GM18951 (cell line): ENCODE measurements at regions of chr6 and their contacts with region 1.

Region 1: GRCh38 chr6:25490018-25490801 is 161.8 kb upstream of the SCGN start:
- POLR2A ChIP-seq: no peak

Region 2: DNA sequence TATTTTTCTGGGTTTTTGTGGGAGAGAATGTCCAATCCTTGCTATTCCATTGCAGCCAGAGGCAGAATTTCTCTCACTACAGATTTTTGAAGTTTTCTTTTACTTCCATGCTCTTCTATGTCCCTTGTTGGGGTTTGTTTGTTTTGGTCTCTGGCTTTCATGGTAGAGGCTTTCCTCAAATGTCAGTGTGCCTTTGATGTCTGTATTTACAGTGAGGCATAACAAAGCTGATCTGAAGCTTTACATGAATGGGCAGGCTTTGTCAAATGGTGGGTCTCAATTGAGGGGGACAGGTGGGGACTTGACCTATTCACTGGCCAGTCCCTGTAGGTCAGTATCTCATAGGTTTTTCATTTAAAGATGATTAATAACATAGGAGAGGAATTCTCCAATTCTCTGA is 219.7 kb before region 1 on chr6:
- in situ Hi-C with region 1: loop called (anchors 5 kb)
- POLR2A ChIP-seq: no peak

Region 3: GRCh38 chr6:25441663-25442270 is 48.4 kb before region 1 on chr6:
- in situ Hi-C with region 1: no loop called
- POLR2A ChIP-seq: no peak

Region 4: GRCh38 chr6:25601800-25602673 is 111.8 kb after region 1 on chr6:
- in situ Hi-C with region 1: loop called (anchors 10 kb)
- POLR2A ChIP-seq: no peak

Region 5: GRCh38 chr6:25769986-25770385 is 279.8 kb after region 1 on chr6:
- in situ Hi-C with region 1: no loop called
- POLR2A ChIP-seq: no peak

Region 6: GRCh38 chr6:25829375-25829774 is 339.2 kb after region 1 on chr6:
- in situ Hi-C with region 1: no loop called
- POLR2A ChIP-seq: no peak